ENCODE measurements at regions of chr6 and their contacts with region 1.

Region 1: GRCh38 chr6:10694302-10695085 is at the starts of genes C6orf52 and PAK1IP1:
- DNase-seq: peak; percentile 88
- ATAC-seq: peak; percentile 95
- H3K4me3 ChIP-seq: peak within 1 kb of the TSS; percentile 87 to 89
- H3K27ac ChIP-seq: peak within 1 kb of the TSS; percentile 68
- H3K4me1 ChIP-seq: peaks cover 11 to 19% of the 10 kb centered on the region in 2 experiments; a peak in 3 of 4 replicates
- H3K27me3 ChIP-seq: no peaks in the 10 kb centered on the region
- CTCF ChIP-seq: no peak
- POLR2A ChIP-seq: peak; percentile 82
- RAD21 ChIP-seq: 0 out of 2 replicates have a peak, but pooled peaks have one; percentile 18
- total RNA-seq, gene C6orf52: 3.9 TPM
- total RNA-seq, gene PAK1IP1: 24.3 TPM

Region 2: GRCh38 chr6:10478187-10479040 is 216.1 kb before region 1 on chr6:
- CTCF ChIA-PET with region 1: no interaction called
- POLR2A ChIA-PET with region 1: no interaction called
- RAD21 ChIA-PET with region 1: no interaction called
- intact Hi-C with region 1: loop called (anchors 1 kb)
- DNase-seq: peak; percentile 41
- ATAC-seq: peak; percentile 79
- H3K4me3 ChIP-seq: no peak overlapping the region
- H3K27ac ChIP-seq: no peak overlapping the region
- H3K4me1 ChIP-seq: peaks cover 0 to 10% of the 10 kb centered on the region in 2 experiments; a peak in 2 of 4 replicates
- H3K27me3 ChIP-seq: no peaks in the 10 kb centered on the region
- CTCF ChIP-seq: peak; percentile 46 to 79 (median 56); a peak in 4 of 6 replicates
- POLR2A ChIP-seq: no peak
- RAD21 ChIP-seq: peak; percentile 85

Region 3: GRCh38 chr6:10510592-10511367 is 183.7 kb before region 1 on chr6:
- CTCF ChIA-PET with region 1: no interaction called
- POLR2A ChIA-PET with region 1: no interaction called
- RAD21 ChIA-PET with region 1: no interaction called
- intact Hi-C with region 1: loop called (anchors 2 kb)
- DNase-seq: peak; percentile 38
- ATAC-seq: peak; percentile 100
- H3K4me3 ChIP-seq: no peak overlapping the region
- H3K27ac ChIP-seq: no peak overlapping the region
- H3K4me1 ChIP-seq: no peaks in the 10 kb centered on the region
- H3K27me3 ChIP-seq: no peaks in the 10 kb centered on the region
- CTCF ChIP-seq: peak; percentile 70 to 86 (median 84)
- POLR2A ChIP-seq: no peak
- RAD21 ChIP-seq: peak; percentile 94

Region 4: DNA sequence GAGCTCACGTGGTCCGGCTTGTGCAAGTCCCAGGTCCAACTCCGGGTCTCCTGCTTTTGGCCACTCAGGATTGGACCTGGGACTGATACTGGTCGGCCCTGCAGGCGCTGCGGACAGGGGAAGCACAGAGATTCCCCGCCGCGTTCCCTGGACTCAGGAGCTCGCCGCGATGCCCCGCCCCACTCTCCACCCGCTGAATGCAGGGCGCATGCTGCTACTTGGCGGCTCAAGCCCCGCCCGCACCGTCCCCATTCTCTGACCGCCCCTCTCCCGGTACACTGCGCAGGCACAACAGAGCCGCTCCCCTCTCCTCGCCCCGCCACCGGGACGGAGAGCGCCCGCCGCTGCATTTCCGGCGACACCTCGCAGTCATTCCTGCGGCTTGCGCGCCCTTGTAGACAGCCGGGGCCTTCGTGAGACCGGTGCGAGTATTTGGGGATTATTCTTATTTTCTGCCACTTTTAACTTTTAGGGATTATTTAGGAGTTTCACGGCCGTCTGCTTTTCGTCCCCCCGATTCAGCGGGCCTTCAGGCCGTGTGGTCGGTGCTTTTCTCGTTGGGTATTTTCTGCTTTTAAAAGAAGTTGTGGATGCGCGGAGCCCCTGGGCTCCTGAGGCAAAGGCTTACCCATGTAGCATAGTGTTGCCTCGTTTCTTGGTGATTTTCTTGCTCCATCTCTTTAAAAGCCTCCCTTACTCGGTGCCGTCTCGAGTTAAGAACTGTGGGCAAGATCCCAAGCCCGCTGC is 28.5 kb after region 1 on chr6 and contains the start of gene TMEM14C:
- CTCF ChIA-PET with region 1: no interaction called
- POLR2A ChIA-PET with region 1: interaction called, 6 read pairs
- RAD21 ChIA-PET with region 1: no interaction called
- intact Hi-C with region 1: loop called (anchors 1 kb)
- DNase-seq: peak; percentile 95
- ATAC-seq: peak; percentile 99
- H3K4me3 ChIP-seq: peak within 1 kb of the TSS; percentile 78 to 85
- H3K27ac ChIP-seq: peak within 1 kb of the TSS; percentile 71
- H3K4me1 ChIP-seq: peaks cover 12 to 21% of the 10 kb centered on the region in 2 experiments; a peak in 3 of 4 replicates
- H3K27me3 ChIP-seq: no peaks in the 10 kb centered on the region
- CTCF ChIP-seq: no peak
- POLR2A ChIP-seq: peak; percentile 65
- RAD21 ChIP-seq: no peak
- total RNA-seq, gene TMEM14C: 84.7 TPM

Region 5: GRCh38 chr6:10747251-10747972 is 52.9 kb after region 1 on chr6 and contains the start of gene TMEM14B:
- CTCF ChIA-PET with region 1: no interaction called
- POLR2A ChIA-PET with region 1: interaction called, 6 read pairs
- RAD21 ChIA-PET with region 1: no interaction called
- intact Hi-C with region 1: loop called (anchors 1 kb)
- DNase-seq: peak; percentile 91
- ATAC-seq: peak; percentile 98
- H3K4me3 ChIP-seq: peak within 1 kb of the TSS; percentile 84 to 90
- H3K27ac ChIP-seq: peak within 1 kb of the TSS; percentile 57
- H3K4me1 ChIP-seq: peaks cover 9 to 21% of the 10 kb centered on the region in 2 experiments; a peak in 3 of 4 replicates
- H3K27me3 ChIP-seq: no peaks in the 10 kb centered on the region
- CTCF ChIP-seq: no peak
- POLR2A ChIP-seq: peak; percentile 92
- RAD21 ChIP-seq: no peak
- total RNA-seq, gene TMEM14B: 83.6 TPM

Region 6: GRCh38 chr6:10800829-10801535 is 106.5 kb after region 1 on chr6:
- CTCF ChIA-PET with region 1: no interaction called
- POLR2A ChIA-PET with region 1: no interaction called
- RAD21 ChIA-PET with region 1: no interaction called
- intact Hi-C with region 1: loop called (anchors 5 kb)
- DNase-seq: peak; percentile 28
- ATAC-seq: peak; percentile 99
- H3K4me3 ChIP-seq: no peak overlapping the region
- H3K27ac ChIP-seq: no peak overlapping the region
- H3K4me1 ChIP-seq: peaks cover 6 to 7% of the 10 kb centered on the region in 2 experiments; a peak in 3 of 4 replicates
- H3K27me3 ChIP-seq: no peaks in the 10 kb centered on the region
- CTCF ChIP-seq: peak; percentile 75 to 99 (median 99)
- POLR2A ChIP-seq: no peak
- RAD21 ChIP-seq: peak; percentile 92